ENCODE measurements at regions of chr10 and their contacts with region 1.

Region 1: GRCh38 chr10:99435986-99436638 is 5.7 kb upstream of the GOT1 start:
- DNase-seq: no peak
- H3K4me3 ChIP-seq: no peak overlapping the region
- H3K27ac ChIP-seq: no peak overlapping the region
- H3K4me1 ChIP-seq: no peaks in the 10 kb centered on the region
- H3K27me3 ChIP-seq: no peaks in the 10 kb centered on the region
- CTCF ChIP-seq: peak in 2 of 3 experiments; percentile 38 to 40; a peak in 2 of 4 replicates
- EP300 ChIP-seq: no peak
- POLR2A ChIP-seq: no peak
- RAD21 ChIP-seq: peak; percentile 67 to 70

Region 2: DNA sequence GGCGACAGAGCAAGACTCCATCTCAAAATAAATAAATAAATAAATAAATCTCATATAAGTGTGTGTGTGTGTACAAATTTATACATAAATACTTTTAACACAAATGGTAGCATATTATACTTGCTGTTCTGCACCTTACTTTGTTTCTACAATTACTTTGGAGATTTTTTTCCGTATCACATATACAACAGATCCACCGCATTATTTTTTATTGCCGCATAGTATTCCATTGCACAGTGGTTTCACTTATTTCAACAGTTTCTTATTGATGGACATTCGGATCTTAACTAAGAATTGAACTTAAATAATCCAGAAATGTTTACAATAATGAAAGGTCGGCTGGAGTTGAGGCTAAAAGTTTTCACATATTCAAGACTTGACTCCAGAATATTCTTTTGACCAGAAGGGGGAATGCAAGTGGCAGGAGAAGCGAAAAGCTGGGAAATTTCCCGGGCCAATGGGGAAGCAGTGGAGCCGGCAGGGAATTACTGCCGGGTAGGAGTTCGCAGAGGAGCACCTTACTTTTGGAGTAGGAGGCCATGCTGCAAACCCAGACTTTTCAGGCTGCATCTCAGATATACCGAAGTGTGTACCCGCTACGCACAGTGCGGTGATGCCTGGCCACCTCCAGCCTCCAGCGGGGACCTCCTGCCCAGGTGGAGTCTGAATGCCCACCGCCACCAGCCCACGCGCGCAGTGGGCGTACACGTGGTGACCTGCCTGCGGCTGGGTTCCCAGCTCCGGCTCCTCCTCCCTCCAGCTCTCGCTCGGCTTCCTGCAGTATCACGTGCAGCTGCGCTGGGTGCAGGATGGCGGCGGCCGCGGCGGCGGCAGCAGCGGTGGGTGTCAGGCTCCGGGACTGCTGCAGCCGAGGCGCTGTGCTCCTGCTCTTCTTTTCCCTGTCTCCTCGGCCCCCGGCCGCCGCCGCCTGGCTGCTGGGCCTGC is 107.3 kb before region 1 on chr10 and contains the start of gene CNNM1:
- CTCF ChIA-PET with region 1: no interaction called
- POLR2A ChIA-PET with region 1: no interaction called
- DNase-seq: peak in 1 of 2 experiments; percentile 74
- H3K4me3 ChIP-seq: peak within 1 kb of the TSS; percentile 26 to 68 (median 54)
- H3K27ac ChIP-seq: no peak within 1 kb of the TSS
- H3K4me1 ChIP-seq: peaks cover 0 to 13% (median 4%) of the 10 kb centered on the region in 4 experiments; a peak in 6 of 7 replicates
- H3K27me3 ChIP-seq: peaks cover 22 to 38% (median 34%) of the 10 kb centered on the region in 4 experiments
- CTCF ChIP-seq: no peak
- EP300 ChIP-seq: no peak
- POLR2A ChIP-seq: no peak
- RAD21 ChIP-seq: no peak
- total RNA-seq, gene CNNM1: 0.57 and 0.74 TPM in 2 replicates

Region 3: DNA sequence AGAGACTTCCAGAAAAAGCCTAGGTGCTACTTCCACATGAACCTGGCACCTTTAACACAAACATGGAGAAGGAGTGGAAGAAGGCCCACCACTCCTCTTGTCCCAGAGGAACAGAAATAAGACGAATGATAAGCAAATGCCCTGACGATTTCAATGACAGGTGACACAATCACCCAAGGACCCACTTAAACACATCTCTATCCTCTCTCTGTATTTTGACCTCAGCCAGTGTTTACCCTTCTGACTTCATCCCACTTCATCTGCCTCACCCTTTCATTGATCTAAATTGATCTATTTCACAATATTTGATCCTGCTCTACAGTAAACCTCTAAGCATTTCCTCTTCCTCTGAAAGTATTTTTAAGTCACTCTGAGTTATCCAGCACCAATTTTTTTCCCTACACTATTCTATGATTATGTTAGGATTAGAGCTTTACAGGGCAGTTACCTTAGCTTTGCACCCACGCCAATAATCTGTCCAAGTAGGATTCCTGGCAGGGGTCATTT is 14.8 kb before region 1 on chr10:
- CTCF ChIA-PET with region 1: interaction called, 17 read pairs
- POLR2A ChIA-PET with region 1: interaction called, 17 read pairs
- DNase-seq: no peak
- H3K4me3 ChIP-seq: no peak overlapping the region
- H3K27ac ChIP-seq: no peak overlapping the region
- H3K4me1 ChIP-seq: no peaks in the 10 kb centered on the region
- H3K27me3 ChIP-seq: no peaks in the 10 kb centered on the region
- CTCF ChIP-seq: no peak
- EP300 ChIP-seq: no peak
- POLR2A ChIP-seq: no peak
- RAD21 ChIP-seq: no peak

Region 4: GRCh38 chr10:99461230-99461629 is 25.1 kb after region 1 on chr10:
- CTCF ChIA-PET with region 1: interaction called, 12 read pairs
- POLR2A ChIA-PET with region 1: no interaction called
- DNase-seq: no peak
- H3K4me3 ChIP-seq: no peak overlapping the region
- H3K27ac ChIP-seq: no peak overlapping the region
- H3K4me1 ChIP-seq: no peaks in the 10 kb centered on the region
- H3K27me3 ChIP-seq: peaks cover 0 to 1% (median 0%) of the 10 kb centered on the region in 4 experiments; a peak in 1 of 7 replicates
- CTCF ChIP-seq: no peak
- EP300 ChIP-seq: no peak
- POLR2A ChIP-seq: no peak
- RAD21 ChIP-seq: no peak

Region 5: GRCh38 chr10:99540306-99540656 is 104.2 kb after region 1 on chr10:
- CTCF ChIA-PET with region 1: interaction called, 15 read pairs
- POLR2A ChIA-PET with region 1: interaction called, 3 read pairs
- DNase-seq: no peak
- H3K4me3 ChIP-seq: peak overlapping the region in 1 of 4 experiments; percentile 53; a peak in 2 of 8 replicates
- H3K27ac ChIP-seq: no peak overlapping the region
- H3K4me1 ChIP-seq: peaks cover 2 to 27% (median 17%) of the 10 kb centered on the region in 4 experiments
- H3K27me3 ChIP-seq: peaks cover 72 to 96% (median 88%) of the 10 kb centered on the region in 4 experiments
- CTCF ChIP-seq: no peak
- EP300 ChIP-seq: no peak
- POLR2A ChIP-seq: no peak
- RAD21 ChIP-seq: no peak

Region 6: GRCh38 chr10:99612167-99612831 is 176.2 kb after region 1 on chr10:
- CTCF ChIA-PET with region 1: interaction called, 77 read pairs
- POLR2A ChIA-PET with region 1: interaction called, 6 read pairs
- DNase-seq: no peak
- H3K4me3 ChIP-seq: no peak overlapping the region
- H3K27ac ChIP-seq: no peak overlapping the region; the same call in 1 of the 2 replicates
- H3K4me1 ChIP-seq: no peaks in the 10 kb centered on the region
- H3K27me3 ChIP-seq: no peaks in the 10 kb centered on the region
- CTCF ChIP-seq: peak in 2 of 3 experiments; percentile 83 to 89; a peak in 3 of 4 replicates
- EP300 ChIP-seq: no peak
- POLR2A ChIP-seq: no peak
- RAD21 ChIP-seq: peak; percentile 95 to 96